Cardiac septum (tissue), 1 donor: ENCODE measurements at regions of chr1 and their contacts with region 1.

Region 1: GRCh38 chr1:45569962-45570581 is 13.8 kb upstream of the NASP start:
- DNase-seq: peak; percentile 81

Region 2: DNA sequence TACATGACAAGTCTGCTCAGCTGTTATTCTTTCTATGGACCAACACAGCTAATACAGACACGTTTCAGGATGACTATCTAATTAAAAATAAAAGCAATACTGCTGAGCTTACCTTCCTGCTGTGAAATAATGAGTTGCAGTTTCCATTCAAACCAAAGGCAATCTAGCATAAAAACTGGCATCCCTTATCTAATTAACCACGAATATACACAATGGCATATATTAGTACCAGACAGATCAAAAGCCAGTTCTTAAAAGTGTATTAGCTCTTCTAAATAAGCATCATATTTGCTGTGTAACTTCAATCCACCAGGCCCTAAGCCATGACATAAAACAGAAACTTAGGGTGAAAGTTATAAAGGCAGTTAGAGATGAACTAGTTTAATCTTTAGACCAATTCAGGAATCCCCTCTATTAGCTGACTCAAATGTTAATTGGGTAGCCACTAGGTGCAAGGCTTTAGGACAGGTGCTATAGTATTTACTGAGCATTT is 99.7 kb before region 1 on chr1:
- intact Hi-C with region 1: no loop called
- DNase-seq: no peak

Region 3: GRCh38 chr1:45510972-45511527 is 59.0 kb before region 1 on chr1:
- intact Hi-C with region 1: loop called (anchors 2 kb)
- DNase-seq: no peak